ENCODE measurements at regions of chr1 and their contacts with region 1.

Region 1: DNA sequence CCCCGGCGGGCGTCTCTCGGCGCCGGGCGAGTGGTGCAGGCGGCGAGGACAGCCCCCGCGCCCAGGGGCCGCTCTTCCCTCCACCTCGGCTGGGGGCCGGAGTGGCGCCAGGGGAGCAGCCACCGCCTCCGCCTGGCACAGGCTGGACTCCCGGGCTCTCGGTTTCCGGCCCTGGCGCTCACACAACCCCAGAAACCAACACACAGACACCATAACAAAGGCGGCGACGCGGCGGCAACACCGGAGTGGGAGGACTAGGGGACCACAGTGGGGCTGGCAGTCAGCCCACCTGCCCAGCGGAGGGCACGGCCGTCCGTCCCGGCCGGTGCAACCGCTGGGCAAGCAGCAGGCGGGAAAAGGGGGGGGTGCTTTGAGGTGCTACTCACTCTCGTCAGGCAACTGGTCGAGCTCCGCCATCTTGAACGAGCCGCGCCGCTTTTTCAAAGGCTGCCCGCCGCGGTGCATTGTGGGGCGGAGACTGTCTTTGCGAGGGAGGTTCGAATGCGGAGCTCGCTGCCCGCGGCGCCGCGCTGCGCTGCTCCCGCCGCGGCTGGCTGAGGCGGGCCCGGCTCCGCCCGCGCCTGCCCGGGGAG is at the start of gene LIN9:
- DNase-seq: peak; percentile 95
- ATAC-seq: peak; percentile 77
- H3K4me3 Mint-ChIP-seq: peak within 1 kb of the TSS; percentile 84
- H3K27ac Mint-ChIP-seq: peak within 1 kb of the TSS; percentile 72
- H3K4me1 Mint-ChIP-seq: peaks cover 39% of the 10 kb centered on the region
- H3K27me3 Mint-ChIP-seq: peaks cover 22% of the 10 kb centered on the region
- CTCF ChIP-seq: no peak
- total RNA-seq, gene LIN9: 10.4 to 15.7 TPM (median 10.7 TPM) in 3 replicates

Region 2: DNA sequence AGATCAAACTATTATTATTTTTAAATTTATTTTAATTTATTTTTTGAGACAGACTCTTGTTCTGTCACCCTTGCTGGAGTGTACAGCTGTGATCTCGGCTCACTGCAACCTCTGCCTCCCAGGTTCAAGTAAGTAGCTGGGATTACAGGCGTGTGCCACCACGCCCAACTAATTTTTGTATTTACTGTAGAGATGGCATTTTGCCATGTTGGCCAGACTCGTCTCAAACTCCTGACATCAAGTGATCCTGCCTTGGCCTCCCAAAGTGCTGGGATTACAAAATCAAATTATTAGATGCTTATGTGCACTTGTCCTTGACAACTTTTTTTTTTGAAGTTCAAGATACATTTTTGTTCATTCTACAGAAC is 15.3 kb before region 1 on chr1:
- CTCF ChIA-PET with region 1: no interaction called
- POLR2A ChIA-PET with region 1: no interaction called
- DNase-seq: no peak
- ATAC-seq: no peak
- H3K4me3 Mint-ChIP-seq: no peak overlapping the region
- H3K27ac Mint-ChIP-seq: no peak overlapping the region
- H3K4me1 Mint-ChIP-seq: no peaks in the 10 kb centered on the region
- H3K27me3 Mint-ChIP-seq: no peaks in the 10 kb centered on the region
- CTCF ChIP-seq: no peak

Region 3: DNA sequence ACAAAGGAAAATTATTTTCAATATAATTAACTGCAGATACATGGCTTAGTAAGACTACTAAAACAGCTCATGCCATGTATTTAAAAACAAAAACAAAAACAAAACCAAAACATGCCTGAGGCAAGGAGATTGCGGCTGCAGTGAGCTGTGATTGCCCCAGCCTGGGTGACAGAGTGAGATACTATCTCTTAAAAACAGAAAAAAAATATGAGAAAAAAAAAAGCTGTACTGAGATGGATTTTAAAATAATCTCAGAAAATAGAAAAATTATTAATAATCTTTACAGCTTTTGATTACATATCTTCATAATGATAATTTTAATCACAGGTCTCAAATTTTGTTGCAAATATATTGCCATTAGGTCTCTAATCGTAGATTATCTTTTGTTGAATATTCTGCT is 24.1 kb after region 1 on chr1:
- CTCF ChIA-PET with region 1: interaction called, 19 read pairs
- POLR2A ChIA-PET with region 1: interaction called, 3 read pairs
- DNase-seq: no peak
- ATAC-seq: peak; percentile 37
- H3K4me3 Mint-ChIP-seq: peak overlapping the region; percentile 46
- H3K27ac Mint-ChIP-seq: peak overlapping the region; percentile 75; the same call in 1 of the 2 replicates
- H3K4me1 Mint-ChIP-seq: peaks cover 7% of the 10 kb centered on the region
- H3K27me3 Mint-ChIP-seq: no peaks in the 10 kb centered on the region
- CTCF ChIP-seq: no peak